Brain microvascular endothelial cell (primary cell): ENCODE measurements at regions of chr12 and their contacts with region 1.

Region 1: DNA sequence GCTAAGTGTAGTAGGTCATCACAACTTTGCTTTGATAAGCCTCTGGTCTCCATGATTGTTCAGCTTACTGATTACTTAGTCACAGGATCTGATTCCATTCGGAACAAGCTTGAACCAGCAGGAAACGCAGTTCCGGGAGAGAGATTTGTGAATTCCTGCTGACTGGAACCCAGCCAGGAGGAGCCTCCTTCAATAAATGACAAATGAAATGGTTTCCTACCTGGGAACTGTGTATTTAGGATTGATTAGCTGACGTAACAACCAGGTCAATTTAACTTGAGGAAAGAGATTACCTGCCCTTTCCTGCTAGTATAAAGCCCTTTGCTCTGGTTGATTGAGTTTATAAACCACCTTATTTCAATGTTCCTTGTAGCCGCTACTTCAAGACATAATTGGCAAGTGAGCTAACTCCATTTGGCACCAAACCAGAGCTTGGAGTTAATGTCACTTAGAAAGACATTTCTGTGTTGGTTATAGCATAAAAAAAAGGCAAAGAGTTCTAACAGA is 35.1 kb upstream of the KCNH3 start:
- DNase-seq: peak; percentile 83
- H3K4me3 ChIP-seq: no peak overlapping the region
- H3K27ac ChIP-seq: peak overlapping the region; percentile 68
- H3K27me3 ChIP-seq: no peaks in the 10 kb centered on the region
- CTCF ChIP-seq: no peak

Region 2: GRCh38 chr12:49366652-49367380 is 136.9 kb before region 1 on chr12:
- in situ Hi-C with region 1: loop called (anchors 25 kb)
- DNase-seq: peak; percentile 76
- H3K4me3 ChIP-seq: peak overlapping the region; percentile 78
- H3K27ac ChIP-seq: peak overlapping the region; percentile 94
- H3K27me3 ChIP-seq: no peaks in the 10 kb centered on the region
- CTCF ChIP-seq: peak; percentile 48